Dorsolateral prefrontal cortex (tissue), 120 donors: ENCODE measurements at regions of chr16 and their contacts with region 1.

Region 1: GRCh38 chr16:74501484-74502479 is 80.5 kb upstream of the CLEC18B start:
- DNase-seq: peak in 1 of 10 donors; percentile 14
- H3K4me3 ChIP-seq: peak overlapping the region in 28 of 59 donors; percentile 1 to 49 (median 12)
- H3K27ac ChIP-seq: peak overlapping the region; percentile 71 to 98 (median 91)
- H3K27me3 ChIP-seq: no peaks in the 10 kb centered on the region
- CTCF ChIP-seq: peak in 1 of 56 donors; percentile 14

Region 2: GRCh38 chr16:74451951-74452758 is 49.6 kb before region 1 on chr16:
- intact Hi-C with region 1: no loop called
- DNase-seq: no peak
- H3K4me3 ChIP-seq: no peak overlapping the region
- H3K27ac ChIP-seq: no peak overlapping the region
- H3K27me3 ChIP-seq: no peaks in the 10 kb centered on the region
- CTCF ChIP-seq: no peak

Region 3: DNA sequence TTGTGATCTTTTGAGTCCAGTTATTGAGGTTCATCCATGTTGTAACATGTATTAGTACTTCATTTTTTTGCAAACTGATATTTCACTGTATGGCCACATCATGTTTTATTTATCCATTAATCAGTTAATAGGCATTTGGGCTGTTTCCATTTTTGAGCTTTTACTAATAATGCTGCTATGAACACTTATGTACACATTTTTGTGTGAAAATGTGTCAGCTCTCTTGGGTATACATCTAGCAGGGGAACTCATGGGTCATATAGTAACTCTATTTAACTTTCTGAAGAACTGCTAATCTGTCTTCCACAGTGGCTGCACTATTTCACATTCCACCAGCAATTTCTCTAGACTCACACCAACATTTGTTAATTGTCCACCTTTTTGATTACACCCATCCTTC is 23.1 kb after region 1 on chr16:
- intact Hi-C with region 1: no loop called
- DNase-seq: no peak
- H3K4me3 ChIP-seq: no peak overlapping the region
- H3K27ac ChIP-seq: no peak overlapping the region
- H3K27me3 ChIP-seq: no peaks in the 10 kb centered on the region
- CTCF ChIP-seq: no peak

Region 4: DNA sequence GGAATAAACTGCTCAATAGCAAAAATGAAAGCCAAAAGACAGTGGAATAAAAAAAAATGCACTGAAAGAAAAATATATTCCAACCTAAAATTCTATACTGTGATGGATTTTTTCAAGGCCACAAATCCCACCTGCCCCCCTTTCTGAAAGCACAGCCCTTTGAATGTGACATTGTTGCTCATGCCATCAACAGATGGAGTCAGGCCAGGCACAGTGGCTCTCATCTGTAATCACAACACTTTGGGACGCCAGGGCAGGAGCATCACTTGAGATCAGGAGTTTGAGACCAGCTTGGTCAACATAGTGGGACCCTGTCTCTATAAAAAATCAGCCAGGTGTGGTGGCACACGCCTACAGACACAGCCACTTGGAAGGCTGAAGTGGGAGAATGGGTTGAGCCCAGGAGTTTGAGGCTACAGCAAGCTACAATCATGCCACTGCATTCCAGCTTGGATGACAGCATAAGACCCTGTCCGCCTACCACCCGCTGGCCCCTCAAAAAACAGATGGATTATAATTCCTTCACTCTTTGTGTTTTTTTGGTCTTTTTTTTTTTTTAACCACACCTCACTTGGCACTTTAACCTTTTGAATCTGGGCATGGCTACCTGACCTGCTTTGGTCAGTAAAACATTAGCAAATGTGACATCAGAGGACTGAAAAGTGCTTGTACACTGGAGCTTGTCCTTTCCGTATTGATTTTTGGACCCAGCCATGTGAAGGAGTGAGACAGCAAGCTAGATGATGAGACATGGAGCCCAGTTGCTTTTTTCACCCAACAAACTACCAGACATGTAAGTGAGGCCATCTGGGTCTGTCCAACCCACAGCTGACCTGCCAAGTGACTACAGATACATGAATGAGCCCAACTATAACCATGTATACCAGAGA is 68.9 kb after region 1 on chr16:
- intact Hi-C with region 1: loop called in 1 of 2 experiments (anchors 5 kb)
- DNase-seq: peak in 2 of 10 donors; percentile 46 to 65
- H3K4me3 ChIP-seq: no peak overlapping the region
- H3K27ac ChIP-seq: peak overlapping the region in 37 of 59 donors; percentile 1 to 79 (median 47)
- H3K27me3 ChIP-seq: no peaks in the 10 kb centered on the region
- CTCF ChIP-seq: peak in 2 of 56 donors; percentile 11 to 22